ENCODE measurements at regions of chr12 and their contacts with region 1.

Region 1: DNA sequence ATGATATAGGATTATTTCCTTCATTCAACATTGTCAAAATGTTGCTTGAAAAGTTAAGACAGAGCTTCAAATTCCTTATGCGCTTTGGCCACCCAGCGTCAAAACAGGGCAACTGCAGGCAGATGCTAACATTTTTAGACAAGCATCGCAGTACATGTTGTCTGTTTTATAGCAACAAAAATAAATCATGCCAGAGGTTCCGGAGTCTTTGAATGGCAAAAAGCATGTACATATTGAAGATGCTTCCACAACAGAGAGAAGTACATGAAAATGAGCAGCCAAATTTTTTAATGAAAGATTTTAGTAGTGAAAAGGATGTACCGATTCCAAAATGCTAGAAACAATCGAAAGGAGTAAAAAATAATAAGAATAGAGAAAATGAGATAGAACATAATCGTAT is 49.8 kb upstream of the USP15 start:
- DNase-seq: no peak
- H3K4me3 ChIP-seq: no peak overlapping the region
- H3K27me3 ChIP-seq: no peaks in the 10 kb centered on the region
- CTCF ChIP-seq: peak; percentile 91

Region 2: DNA sequence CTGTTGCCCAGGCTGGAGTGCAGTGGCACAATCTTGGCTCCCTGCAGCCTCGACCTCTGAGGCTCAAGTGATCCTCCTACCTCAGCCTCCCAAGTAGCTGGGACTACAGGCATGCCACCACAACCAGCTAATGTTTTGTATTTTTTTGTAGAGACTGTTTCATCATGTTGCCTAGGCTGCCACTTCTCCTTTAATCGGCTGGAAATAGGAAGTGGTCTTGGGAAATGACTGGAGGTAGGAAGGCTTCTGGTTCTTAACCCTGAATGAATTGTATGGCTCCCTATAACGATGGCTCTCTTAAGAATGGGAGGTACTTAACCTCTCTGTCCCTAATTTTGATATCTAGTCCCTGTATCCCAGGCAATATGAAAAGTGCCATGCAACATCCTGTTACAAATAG is 64.1 kb before region 1 on chr12:
- CTCF ChIA-PET with region 1: no interaction called
- POLR2A ChIA-PET with region 1: no interaction called
- DNase-seq: no peak
- H3K4me3 ChIP-seq: no peak overlapping the region
- H3K27me3 ChIP-seq: no peaks in the 10 kb centered on the region
- CTCF ChIP-seq: no peak

Region 3: GRCh38 chr12:62192180-62192902 is 18.1 kb before region 1 on chr12:
- CTCF ChIA-PET with region 1: interaction called, 29 read pairs
- POLR2A ChIA-PET with region 1: no interaction called
- DNase-seq: peak; percentile 46
- H3K4me3 ChIP-seq: peak overlapping the region; percentile 27
- H3K27me3 ChIP-seq: peaks cover 25% of the 10 kb centered on the region
- CTCF ChIP-seq: peak; percentile 66

Region 4: DNA sequence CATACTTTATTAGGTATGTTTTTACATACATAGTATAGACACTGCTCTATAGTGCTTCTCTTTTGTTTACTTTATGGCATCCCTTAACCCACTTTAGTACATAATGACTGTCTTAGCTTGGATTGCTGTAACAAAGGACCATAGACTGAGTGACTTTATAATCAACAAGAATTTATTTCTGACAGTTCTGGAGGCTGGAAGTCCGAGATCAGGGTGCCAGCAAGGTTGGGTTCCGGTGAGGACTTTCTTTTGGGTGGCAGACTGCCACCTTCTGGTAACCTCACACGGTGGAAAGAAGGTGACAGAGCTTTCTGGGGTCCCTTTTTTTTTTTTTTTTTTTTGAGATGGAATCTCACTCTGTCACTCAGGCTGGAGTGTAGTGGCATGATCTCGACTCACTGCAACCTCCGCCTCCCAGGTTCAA is 773.2 kb after region 1 on chr12:
- CTCF ChIA-PET with region 1: no interaction called
- POLR2A ChIA-PET with region 1: interaction called, 14 read pairs
- DNase-seq: no peak
- H3K4me3 ChIP-seq: no peak overlapping the region
- H3K27me3 ChIP-seq: no peaks in the 10 kb centered on the region
- CTCF ChIP-seq: 0 out of 2 replicates have a peak, but pooled peaks have one; percentile 2